ENCODE measurements at regions of chr1 and their contacts with region 1.

Region 1: DNA sequence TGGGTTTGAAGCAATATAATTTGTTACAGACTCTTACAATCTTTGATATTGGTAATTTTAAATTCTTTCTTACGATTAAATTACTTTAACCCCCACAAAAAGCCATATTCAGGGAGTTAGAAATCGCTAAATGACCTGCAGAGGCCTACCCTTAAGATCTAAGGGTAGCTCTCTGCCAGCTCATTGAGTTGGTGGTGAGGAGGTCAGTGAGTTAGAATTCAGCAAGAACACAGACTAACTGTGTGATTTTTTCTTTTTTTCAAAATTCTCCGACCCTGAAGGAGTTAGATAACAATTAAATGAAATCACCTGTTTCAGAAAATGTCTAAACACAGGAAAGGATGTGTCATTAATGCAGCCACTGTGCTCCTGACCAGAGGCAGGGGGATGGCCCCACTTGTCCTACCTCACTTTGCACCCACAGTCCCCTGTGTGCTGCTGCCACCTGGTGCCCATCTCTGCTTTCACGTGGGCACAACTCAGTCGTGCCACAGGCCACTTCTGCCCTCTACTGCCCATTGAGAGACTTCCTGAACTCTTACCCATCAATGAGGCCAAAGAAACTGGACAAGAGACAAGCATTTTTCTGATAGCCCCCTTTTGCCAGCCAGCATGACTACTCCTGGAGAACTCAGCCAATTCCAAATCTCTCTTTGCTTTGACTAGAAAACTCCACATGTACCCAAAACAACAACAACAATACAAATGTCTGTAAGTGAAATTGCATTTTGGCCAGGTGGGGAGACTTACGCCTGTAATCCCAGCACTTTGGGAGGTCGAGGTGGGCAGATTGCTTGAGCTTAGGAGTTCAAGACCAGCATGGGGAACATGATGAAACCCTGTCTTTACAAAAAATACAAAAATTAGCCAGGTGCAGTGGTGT is 8.4 kb downstream of the CFAP45 start:
- DNase-seq: peak; percentile 54
- ATAC-seq: peak; percentile 75
- H3K4me3 Mint-ChIP-seq: no peak overlapping the region
- H3K27ac Mint-ChIP-seq: peak overlapping the region; percentile 43
- H3K4me1 Mint-ChIP-seq: peaks cover 24% of the 10 kb centered on the region
- H3K27me3 Mint-ChIP-seq: no peaks in the 10 kb centered on the region
- CTCF ChIP-seq: peak; percentile 75

Region 2: GRCh38 chr1:159161001-159161718 is 730.4 kb before region 1 on chr1:
- CTCF ChIA-PET with region 1: no interaction called
- POLR2A ChIA-PET with region 1: no interaction called
- intact Hi-C with region 1: loop called (anchors 1 kb)
- DNase-seq: peak; percentile 49
- ATAC-seq: peak; percentile 98
- H3K4me3 Mint-ChIP-seq: no peak overlapping the region
- H3K27ac Mint-ChIP-seq: no peak overlapping the region
- H3K4me1 Mint-ChIP-seq: peaks cover 7% of the 10 kb centered on the region
- H3K27me3 Mint-ChIP-seq: no peaks in the 10 kb centered on the region
- CTCF ChIP-seq: peak; percentile 38

Region 3: DNA sequence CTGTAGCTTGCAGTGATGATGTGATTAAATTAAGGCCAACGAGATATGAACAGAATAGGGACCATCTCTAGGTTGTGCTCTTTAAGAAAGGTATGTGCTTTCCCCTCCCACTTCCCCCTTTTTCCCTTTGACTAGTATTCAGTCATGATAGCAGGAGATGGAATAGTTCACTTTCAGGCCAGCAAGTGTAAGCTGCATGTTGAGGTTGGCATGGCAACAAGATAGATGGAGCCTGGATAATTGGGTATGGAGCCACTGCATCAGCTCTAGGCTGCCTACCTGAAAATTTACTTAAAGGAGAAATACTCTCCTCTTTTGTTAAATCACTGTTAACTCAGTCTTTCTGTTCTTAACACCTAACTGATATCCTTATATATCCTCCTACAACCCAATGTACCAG is 175.7 kb before region 1 on chr1:
- CTCF ChIA-PET with region 1: no interaction called
- POLR2A ChIA-PET with region 1: no interaction called
- intact Hi-C with region 1: no loop called
- DNase-seq: no peak
- ATAC-seq: no peak
- H3K4me3 Mint-ChIP-seq: no peak overlapping the region
- H3K27ac Mint-ChIP-seq: no peak overlapping the region
- H3K4me1 Mint-ChIP-seq: no peaks in the 10 kb centered on the region
- H3K27me3 Mint-ChIP-seq: peaks cover 17% of the 10 kb centered on the region
- CTCF ChIP-seq: no peak

Region 4: GRCh38 chr1:159780583-159781582 is 110.6 kb before region 1 on chr1 and contains the start of gene DUSP23:
- CTCF ChIA-PET with region 1: interaction called, 15 read pairs
- POLR2A ChIA-PET with region 1: no interaction called
- intact Hi-C with region 1: loop called (anchors 1 kb)
- DNase-seq: peak; percentile 93
- ATAC-seq: peak; percentile 98
- H3K4me3 Mint-ChIP-seq: peak within 1 kb of the TSS; percentile 83
- H3K27ac Mint-ChIP-seq: peak within 1 kb of the TSS; percentile 68
- H3K4me1 Mint-ChIP-seq: peaks cover 12% of the 10 kb centered on the region
- H3K27me3 Mint-ChIP-seq: peaks cover 3% of the 10 kb centered on the region
- CTCF ChIP-seq: no peak
- total RNA-seq, gene DUSP23: 15.5 and 15.7 TPM in 2 replicates

Region 5: GRCh38 chr1:159821171-159821867 is 70.2 kb before region 1 on chr1:
- CTCF ChIA-PET with region 1: interaction called, 8 read pairs
- POLR2A ChIA-PET with region 1: no interaction called
- intact Hi-C with region 1: loop called (anchors 1 kb)
- DNase-seq: no peak
- ATAC-seq: peak; percentile 50
- H3K4me3 Mint-ChIP-seq: no peak overlapping the region
- H3K27ac Mint-ChIP-seq: no peak overlapping the region
- H3K4me1 Mint-ChIP-seq: peaks cover 5% of the 10 kb centered on the region
- H3K27me3 Mint-ChIP-seq: peaks cover 27% of the 10 kb centered on the region
- CTCF ChIP-seq: no peak

Region 6: GRCh38 chr1:159854693-159855192 is 36.8 kb before region 1 on chr1:
- CTCF ChIA-PET with region 1: interaction called, 13 read pairs
- POLR2A ChIA-PET with region 1: no interaction called
- intact Hi-C with region 1: loop called (anchors 5 kb)
- DNase-seq: peak; percentile 47
- ATAC-seq: peak; percentile 90
- H3K4me3 Mint-ChIP-seq: peak overlapping the region; percentile 84
- H3K27ac Mint-ChIP-seq: no peak overlapping the region
- H3K4me1 Mint-ChIP-seq: peaks cover 12% of the 10 kb centered on the region
- H3K27me3 Mint-ChIP-seq: peaks cover 5% of the 10 kb centered on the region
- CTCF ChIP-seq: no peak

Measured in activated B cell treated with CpG ODN at 0.5 μM for 24 hours (primary cell).